ENCODE measurements at regions of chr1 and their contacts with region 1.

Region 1: DNA sequence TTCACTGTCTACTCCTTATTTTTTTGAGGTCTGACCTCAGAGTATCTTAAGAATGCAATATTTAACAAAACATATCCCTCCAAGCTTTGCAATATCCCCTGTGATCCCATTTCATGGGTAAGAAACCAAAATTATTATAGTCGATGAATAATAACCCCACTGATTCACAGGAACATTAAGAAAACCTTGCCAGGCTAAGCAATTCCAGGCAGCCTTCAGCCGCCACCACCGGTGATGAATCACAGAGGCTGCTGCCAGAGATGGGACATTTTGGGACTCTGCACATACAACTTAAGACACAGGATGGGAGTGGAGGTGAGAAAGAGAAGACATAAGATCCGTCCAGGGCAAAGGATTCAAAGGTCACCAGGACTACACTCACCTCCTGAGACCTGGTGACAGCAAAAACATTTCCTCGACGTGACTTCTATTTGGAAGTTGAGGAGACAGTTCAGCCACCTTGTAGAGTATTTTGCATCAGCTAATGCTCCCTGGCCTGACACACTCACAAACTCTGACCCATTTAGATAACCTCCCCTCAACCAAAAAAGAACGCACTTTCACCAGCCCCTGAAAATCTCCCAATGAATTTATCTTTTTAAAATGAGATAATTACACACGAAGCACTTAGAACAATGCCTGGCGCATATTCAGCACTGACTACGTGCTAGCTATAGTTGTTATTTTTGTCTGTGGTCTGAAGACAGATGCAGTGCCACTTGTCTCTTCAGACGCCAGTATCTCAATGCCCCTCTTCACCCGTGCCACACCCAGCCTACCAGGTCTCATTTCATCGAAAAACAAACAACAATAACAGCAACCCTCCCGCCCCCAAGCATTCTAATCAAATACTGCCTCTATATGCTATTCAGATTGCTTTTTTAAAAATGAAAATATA is 17.8 kb upstream of the OVAAL start:
- DNase-seq: peak; percentile 67 to 86
- ATAC-seq: no peak
- H3K4me3 ChIP-seq: no peak overlapping the region
- H3K27ac ChIP-seq: peak overlapping the region; percentile 86 to 93
- H3K4me1 ChIP-seq: peaks cover 0 to 14% of the 10 kb centered on the region in 2 donors
- H3K27me3 ChIP-seq: no peaks in the 10 kb centered on the region

Region 2: DNA sequence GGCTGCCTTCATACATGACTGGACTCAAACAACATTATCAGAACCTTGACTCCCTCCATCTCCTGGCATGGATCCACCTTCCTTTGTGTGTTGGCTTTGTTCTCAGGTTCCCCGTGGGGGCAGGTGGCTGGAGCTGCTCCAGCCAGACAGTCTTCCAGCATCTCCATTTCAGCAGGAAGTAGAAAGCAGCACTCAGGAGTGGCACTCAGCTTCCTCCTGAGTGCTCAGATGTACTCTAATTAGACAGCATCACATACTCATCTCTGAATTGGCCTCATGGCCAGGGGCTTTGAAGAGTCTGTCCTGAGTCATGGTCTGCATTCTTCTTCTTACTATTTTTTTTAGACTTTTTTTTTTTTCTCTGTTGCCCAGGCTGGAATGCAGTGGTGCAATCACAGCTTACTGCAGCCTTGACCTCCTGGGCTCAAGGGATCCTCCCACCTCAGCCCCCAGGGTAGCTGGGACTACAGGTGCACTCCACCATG is 45.8 kb after region 1 on chr1:
- intact Hi-C with region 1: loop called in 1 of 2 experiments (anchors 5 kb)
- DNase-seq: no peak
- ATAC-seq: no peak
- H3K4me3 ChIP-seq: no peak overlapping the region
- H3K27ac ChIP-seq: no peak overlapping the region
- H3K4me1 ChIP-seq: no peaks in the 10 kb centered on the region
- H3K27me3 ChIP-seq: no peaks in the 10 kb centered on the region